Mammary epithelial cell (primary cell): ENCODE measurements at regions of chr3 and their contacts with region 1.

Region 1: GRCh38 chr3:108887121-108887520 is 64.5 kb downstream of the TRAT1 start:
- DNase-seq: no peak
- H3K4me3 ChIP-seq: no peak overlapping the region
- H3K27ac ChIP-seq: no peak overlapping the region
- H3K4me1 ChIP-seq: no peaks in the 10 kb centered on the region
- H3K27me3 ChIP-seq: no peaks in the 10 kb centered on the region
- CTCF ChIP-seq: no peak

Region 2: GRCh38 chr3:108662130-108662738 is 224.9 kb before region 1 on chr3:
- CTCF ChIA-PET with region 1: no interaction called
- dilution Hi-C with region 1: no loop called
- in situ Hi-C with region 1: no loop called
- intact Hi-C with region 1: no loop called
- DNase-seq: peak; percentile 42
- H3K4me3 ChIP-seq: no peak overlapping the region
- H3K27ac ChIP-seq: no peak overlapping the region
- H3K4me1 ChIP-seq: no peaks in the 10 kb centered on the region
- H3K27me3 ChIP-seq: no peaks in the 10 kb centered on the region
- CTCF ChIP-seq: peak; percentile 61 to 62

Region 3: GRCh38 chr3:108804437-108804836 is 82.7 kb before region 1 on chr3:
- CTCF ChIA-PET with region 1: no interaction called
- dilution Hi-C with region 1: loop called (anchors 5 kb)
- in situ Hi-C with region 1: no loop called
- intact Hi-C with region 1: no loop called
- DNase-seq: peak; percentile 12
- H3K4me3 ChIP-seq: no peak overlapping the region
- H3K27ac ChIP-seq: no peak overlapping the region
- H3K4me1 ChIP-seq: no peaks in the 10 kb centered on the region
- H3K27me3 ChIP-seq: peaks cover 2% of the 10 kb centered on the region
- CTCF ChIP-seq: no peak

Region 4: DNA sequence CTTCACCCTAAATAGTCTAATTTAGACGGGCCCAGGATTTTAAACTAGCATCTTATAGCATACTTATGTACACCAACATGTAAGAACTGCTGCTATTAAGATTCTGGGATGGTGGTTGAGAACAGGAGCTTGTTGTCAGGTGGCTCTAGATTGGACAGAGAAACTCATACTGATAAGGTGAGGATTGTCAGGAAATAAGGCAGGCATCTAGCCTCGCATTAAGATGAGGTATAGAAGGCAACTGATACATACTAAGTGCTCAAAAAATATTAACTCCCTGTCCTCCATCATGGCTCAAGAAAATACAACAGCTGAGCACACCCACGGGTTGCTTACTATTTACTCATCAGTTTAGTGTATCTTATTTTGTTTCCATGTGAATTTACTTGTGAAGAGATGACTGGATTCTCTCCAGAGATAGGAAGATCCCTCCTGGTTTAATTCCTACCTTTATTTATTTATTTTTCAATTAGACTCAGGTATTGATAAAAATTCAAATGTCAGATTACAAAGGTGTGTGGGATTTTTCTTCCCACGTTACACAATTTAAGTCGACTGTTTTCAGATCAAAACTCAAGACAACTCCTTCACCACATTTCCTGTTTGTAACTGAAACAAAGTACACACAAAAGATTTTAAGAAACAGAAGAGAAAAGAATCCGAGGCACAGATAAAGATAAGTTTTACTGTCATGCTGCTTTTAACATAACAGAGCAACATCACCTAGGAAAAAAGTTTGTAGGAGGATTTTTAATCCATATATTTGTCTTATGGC is 64.8 kb before region 1 on chr3 and contains the start of gene TRAT1:
- CTCF ChIA-PET with region 1: no interaction called
- dilution Hi-C with region 1: no loop called
- in situ Hi-C with region 1: no loop called
- intact Hi-C with region 1: no loop called
- DNase-seq: no peak
- H3K4me3 ChIP-seq: no peak within 1 kb of the TSS
- H3K27ac ChIP-seq: no peak within 1 kb of the TSS
- H3K4me1 ChIP-seq: no peaks in the 10 kb centered on the region
- H3K27me3 ChIP-seq: peaks cover 2% of the 10 kb centered on the region
- CTCF ChIP-seq: no peak
- total RNA-seq, gene TRAT1: not detected